ENCODE measurements at regions of chr1 and their contacts with region 1.

Region 1: DNA sequence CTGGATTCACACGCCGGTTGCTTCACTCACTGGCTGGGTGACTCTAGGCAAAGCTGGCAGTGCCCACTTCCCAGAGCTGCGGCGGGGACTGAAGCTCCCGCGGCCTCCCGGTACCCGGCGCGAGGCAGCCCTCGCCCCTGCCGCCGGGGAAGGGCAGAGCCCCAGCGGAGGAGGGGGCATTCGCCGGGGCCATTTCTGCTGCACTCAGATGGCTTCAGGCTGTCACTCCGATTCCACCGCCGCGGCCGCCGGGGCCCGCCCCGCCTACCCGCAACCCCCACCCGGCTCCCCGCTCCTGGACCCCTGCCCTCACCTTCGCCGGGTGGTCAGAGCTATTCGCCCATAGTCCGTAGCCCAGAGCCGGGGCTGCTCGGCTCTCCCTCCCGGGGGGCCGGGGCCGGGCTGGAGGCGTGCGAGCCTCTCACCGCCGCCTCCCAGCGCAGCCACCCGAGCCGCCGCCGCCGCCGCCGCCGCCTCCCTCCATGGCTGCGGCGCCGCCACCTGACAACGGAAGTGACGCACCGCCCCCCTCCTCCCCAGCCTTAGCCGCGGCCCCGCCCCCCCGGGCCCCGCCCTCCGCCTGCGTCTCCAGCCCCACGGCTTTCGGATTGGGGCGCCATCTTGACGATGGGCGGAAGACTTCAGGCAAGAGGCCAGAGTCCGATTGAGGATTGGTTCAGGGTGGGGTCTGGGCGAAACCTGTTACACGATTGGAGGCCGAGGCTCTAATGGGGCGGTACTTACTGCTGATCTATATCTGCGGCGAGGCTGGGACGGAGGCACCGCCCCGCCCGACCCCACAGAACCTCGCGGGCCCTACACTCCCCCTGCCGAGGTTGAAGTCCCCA is at the start of gene STK40:
- DNase-seq: peak; percentile 99
- H3K4me3 Mint-ChIP-seq: peak within 1 kb of the TSS; percentile 89
- H3K27ac Mint-ChIP-seq: peak within 1 kb of the TSS; percentile 99
- H3K4me1 Mint-ChIP-seq: peaks cover 39% of the 10 kb centered on the region
- H3K27me3 Mint-ChIP-seq: no peaks in the 10 kb centered on the region
- CTCF ChIP-seq: no peak
- total RNA-seq, gene STK40: 44.0 and 47.4 TPM in 2 replicates

Region 2: GRCh38 chr1:36306902-36307456 is 78.7 kb before region 1 on chr1:
- CTCF ChIA-PET with region 1: no interaction called
- POLR2A ChIA-PET with region 1: interaction called, 10 read pairs
- intact Hi-C with region 1: no loop called
- DNase-seq: peak; percentile 93
- H3K4me3 Mint-ChIP-seq: peak overlapping the region; percentile 72
- H3K27ac Mint-ChIP-seq: no peak overlapping the region
- H3K4me1 Mint-ChIP-seq: peaks cover 6% of the 10 kb centered on the region
- H3K27me3 Mint-ChIP-seq: no peaks in the 10 kb centered on the region
- CTCF ChIP-seq: no peak

Region 3: GRCh38 chr1:36350659-36351226 is 34.9 kb before region 1 on chr1:
- CTCF ChIA-PET with region 1: interaction called, 11 read pairs
- POLR2A ChIA-PET with region 1: interaction called, 48 read pairs
- intact Hi-C with region 1: no loop called
- DNase-seq: peak; percentile 77
- H3K4me3 Mint-ChIP-seq: peak overlapping the region; percentile 15
- H3K27ac Mint-ChIP-seq: peak overlapping the region; percentile 82
- H3K4me1 Mint-ChIP-seq: peaks cover 39% of the 10 kb centered on the region
- H3K27me3 Mint-ChIP-seq: no peaks in the 10 kb centered on the region
- CTCF ChIP-seq: no peak

Region 4: DNA sequence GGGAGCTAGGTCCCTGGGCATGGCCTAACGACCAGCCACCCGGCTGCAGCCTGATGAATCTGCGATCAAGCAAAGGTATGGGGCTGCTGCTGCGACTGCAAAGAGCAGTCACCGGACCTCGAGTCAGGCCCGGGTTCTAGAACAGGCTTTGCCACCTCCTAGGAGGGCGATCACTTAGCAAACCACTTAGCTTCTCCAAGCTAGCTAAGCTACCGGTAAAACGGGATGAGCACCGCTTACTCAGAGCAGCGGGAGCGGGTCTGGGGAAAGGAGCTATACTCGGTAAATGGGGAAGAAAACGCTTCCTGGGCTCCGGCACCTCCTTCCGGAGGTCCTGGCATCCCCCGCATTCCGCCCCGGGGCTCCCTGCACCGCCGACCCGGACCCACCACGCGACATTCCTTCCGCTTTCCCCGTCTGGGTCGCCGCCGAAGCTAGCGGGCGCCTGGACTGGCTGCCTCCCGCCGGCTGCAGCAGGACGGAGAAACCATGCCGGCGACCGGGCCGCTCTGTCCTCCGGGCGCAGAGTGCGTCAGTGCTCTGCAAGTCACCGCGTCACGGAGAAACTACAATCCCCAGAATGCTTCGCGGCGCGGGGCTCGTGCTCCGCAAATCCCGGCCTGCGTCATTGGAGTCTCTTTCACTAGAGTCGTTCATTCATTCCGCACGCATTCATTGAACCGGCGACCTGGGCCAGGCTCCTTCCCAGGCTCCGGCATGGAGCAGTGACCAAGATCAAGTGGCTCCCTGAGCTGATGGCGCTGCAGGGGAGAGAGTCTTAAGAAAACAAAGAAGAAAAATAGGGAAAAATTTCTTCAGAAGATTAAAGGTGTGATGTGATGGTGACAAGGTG is 12.0 kb after region 1 on chr1 and contains the start of gene LSM10:
- CTCF ChIA-PET with region 1: interaction called, 17 read pairs
- POLR2A ChIA-PET with region 1: interaction called, 148 read pairs
- intact Hi-C with region 1: loop called (anchors 1 kb)
- DNase-seq: peak; percentile 93
- H3K4me3 Mint-ChIP-seq: peak within 1 kb of the TSS; percentile 90
- H3K27ac Mint-ChIP-seq: peak within 1 kb of the TSS; percentile 87
- H3K4me1 Mint-ChIP-seq: peaks cover 7% of the 10 kb centered on the region
- H3K27me3 Mint-ChIP-seq: no peaks in the 10 kb centered on the region
- CTCF ChIP-seq: no peak
- total RNA-seq, gene LSM10: 42.3 and 49.8 TPM in 2 replicates

Region 5: DNA sequence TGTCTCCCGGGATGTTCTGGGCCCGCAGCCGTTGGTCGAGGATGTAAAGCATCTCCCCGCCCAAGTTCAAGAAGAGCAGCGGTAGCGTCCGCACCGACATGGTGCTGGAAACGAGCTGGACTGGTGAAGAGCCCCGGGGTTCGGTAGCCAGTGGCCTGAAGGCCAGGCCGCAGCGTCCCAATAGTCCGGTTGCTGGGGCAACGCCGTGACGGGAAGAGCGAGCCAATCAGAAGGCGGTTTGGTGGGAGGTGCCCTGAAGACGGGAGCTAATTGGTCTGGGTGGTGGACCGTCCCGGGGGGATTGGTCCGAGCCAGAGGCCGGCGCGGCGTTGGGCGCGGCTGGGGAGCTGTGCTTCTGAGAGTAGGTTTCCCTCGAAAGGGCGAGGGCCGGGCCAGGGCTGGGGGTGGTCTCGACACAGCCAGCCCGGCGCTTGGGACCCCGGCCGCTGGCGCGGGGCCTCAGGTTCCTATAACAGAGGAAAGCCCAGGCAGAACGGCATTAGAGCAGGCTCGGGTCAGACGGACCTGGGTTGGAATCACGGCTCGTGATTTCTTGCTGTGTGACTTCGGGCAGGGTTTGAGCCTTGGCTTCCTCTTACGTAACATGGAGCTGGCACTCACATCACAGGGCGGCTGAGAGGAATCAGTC is 64.8 kb after region 1 on chr1 and contains the start of gene OSCP1:
- CTCF ChIA-PET with region 1: no interaction called
- POLR2A ChIA-PET with region 1: interaction called, 34 read pairs
- intact Hi-C with region 1: no loop called
- DNase-seq: peak; percentile 97
- H3K4me3 Mint-ChIP-seq: peak within 1 kb of the TSS; percentile 89
- H3K27ac Mint-ChIP-seq: peak within 1 kb of the TSS; percentile 99
- H3K4me1 Mint-ChIP-seq: peaks cover 24% of the 10 kb centered on the region
- H3K27me3 Mint-ChIP-seq: no peaks in the 10 kb centered on the region
- CTCF ChIP-seq: no peak
- total RNA-seq, gene OSCP1: 7.6 and 15.1 TPM in 2 replicates